ENCODE measurements at regions of chr1 and their contacts with region 1.

Region 1: DNA sequence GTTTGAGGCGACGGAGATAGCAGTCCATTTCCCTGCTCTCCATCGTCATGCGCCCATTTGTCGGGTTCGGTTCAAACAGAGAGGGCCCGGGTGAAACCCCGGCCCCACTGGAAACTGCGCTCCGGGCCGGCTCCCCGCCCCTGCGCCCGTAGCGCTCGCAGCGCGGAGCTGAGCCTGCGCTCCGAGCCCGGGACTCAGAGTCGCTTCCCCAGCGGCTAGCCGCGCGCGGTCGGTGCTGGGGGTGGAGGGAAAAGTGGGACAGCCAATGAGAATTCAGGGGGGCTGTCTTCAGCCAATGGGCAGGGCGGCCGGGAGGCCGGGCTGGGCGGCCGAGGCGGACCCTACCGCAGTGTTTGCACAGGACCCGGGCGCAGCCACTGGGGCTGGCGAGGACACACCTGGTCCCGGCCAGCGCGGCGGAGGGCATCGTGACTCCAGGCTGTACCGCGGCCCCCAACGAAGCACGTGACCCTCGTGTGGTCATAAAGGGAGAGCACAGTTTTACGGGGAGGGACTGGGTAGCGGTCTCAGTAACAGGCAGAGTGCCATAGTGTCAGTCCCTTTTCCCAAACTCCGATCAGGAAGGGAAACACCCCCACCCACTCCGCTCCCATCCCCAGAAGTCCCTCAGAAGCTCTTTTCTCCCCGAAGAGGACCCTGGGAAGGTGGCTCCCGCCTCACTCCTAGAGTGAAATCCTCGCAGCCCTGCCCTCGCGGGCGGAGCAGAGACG is at the start of gene INKA2:
- DNase-seq: peak; percentile 94
- ATAC-seq: peak; percentile 84 to 93 (median 89)
- H3K4me3 ChIP-seq: peak within 1 kb of the TSS; percentile 66 to 80 (median 77)
- H3K27ac ChIP-seq: peak within 1 kb of the TSS; percentile 96 to 100 (median 98)
- H3K4me1 ChIP-seq: peaks cover 18 to 72% (median 68%) of the 10 kb centered on the region in 9 donors
- H3K27me3 ChIP-seq: peaks cover 0 to 32% (median 0%) of the 10 kb centered on the region in 7 donors
- CTCF ChIP-seq: peak in 1 of 9 donors; percentile 3
- total RNA-seq, gene INKA2: 8.7 to 34.6 (median 14.8) TPM

Region 2: DNA sequence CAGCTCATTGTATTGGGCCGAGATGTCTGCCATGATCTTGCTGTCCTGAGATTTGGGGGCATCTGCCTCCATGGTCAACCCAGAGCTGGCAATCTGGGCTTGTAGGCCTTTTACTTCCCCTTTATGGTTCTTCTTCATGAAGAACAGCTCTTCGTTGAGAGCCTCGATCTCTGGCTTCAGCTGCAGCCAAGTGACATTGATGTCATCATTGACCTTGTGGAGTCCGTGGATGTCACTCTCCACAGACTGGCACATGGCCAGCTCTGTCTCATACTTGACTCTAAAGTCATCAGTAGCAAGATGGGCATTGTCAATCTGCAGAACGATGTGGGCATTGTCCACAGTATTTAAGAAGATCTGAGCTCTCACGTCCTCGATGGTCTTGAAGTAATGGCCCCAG is 90.6 kb before region 1 on chr1:
- intact Hi-C with region 1: no loop called
- DNase-seq: peak; percentile 19 to 31
- ATAC-seq: peak in 3 of 8 donors; percentile 21 to 59 (median 38)
- H3K4me3 ChIP-seq: no peak overlapping the region
- H3K27ac ChIP-seq: peak overlapping the region in 3 of 10 donors; percentile 6 to 19 (median 10)
- H3K4me1 ChIP-seq: peaks cover 4 to 63% (median 31%) of the 10 kb centered on the region in 9 donors
- H3K27me3 ChIP-seq: no peaks in the 10 kb centered on the region
- CTCF ChIP-seq: no peak

Region 3: GRCh38 chr1:111720977-111721786 is 18.2 kb before region 1 on chr1:
- intact Hi-C with region 1: loop called in 4 of 10 experiments (anchors 1 to 2 kb)
- DNase-seq: no peak
- ATAC-seq: peak in 4 of 8 donors; percentile 10 to 18 (median 12)
- H3K4me3 ChIP-seq: no peak overlapping the region
- H3K27ac ChIP-seq: peak overlapping the region; percentile 73 to 94 (median 86)
- H3K4me1 ChIP-seq: peaks cover 27 to 69% (median 64%) of the 10 kb centered on the region in 9 donors
- H3K27me3 ChIP-seq: no peaks in the 10 kb centered on the region
- CTCF ChIP-seq: no peak

Region 4: DNA sequence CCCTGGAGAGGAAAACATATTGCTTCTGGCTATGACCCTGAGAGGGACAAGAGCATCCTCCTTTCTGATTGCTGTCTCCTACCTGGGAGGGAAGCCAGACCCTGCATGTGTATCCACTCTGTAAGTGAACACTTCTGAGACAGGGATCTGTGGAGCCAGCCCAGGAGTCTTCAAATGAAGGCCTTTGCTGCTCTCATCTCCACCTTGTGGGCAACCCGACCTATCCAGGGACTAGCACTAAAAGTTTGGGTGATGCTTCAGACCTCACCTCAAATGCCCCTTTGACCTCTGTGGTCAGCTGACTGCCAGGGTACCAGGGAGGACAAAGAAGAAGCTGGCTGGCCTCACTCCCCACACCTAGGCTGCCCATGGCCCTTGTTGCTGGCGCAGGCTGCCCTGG is 185.4 kb after region 1 on chr1:
- intact Hi-C with region 1: no loop called
- DNase-seq: no peak
- ATAC-seq: no peak
- H3K4me3 ChIP-seq: no peak overlapping the region
- H3K27ac ChIP-seq: no peak overlapping the region
- H3K4me1 ChIP-seq: peaks cover 4 to 37% (median 18%) of the 10 kb centered on the region in 9 donors
- H3K27me3 ChIP-seq: no peaks in the 10 kb centered on the region
- CTCF ChIP-seq: no peak